Spleen (tissue), 13 donors: ENCODE measurements at regions of chr14 and their contacts with region 1.

Region 1: GRCh38 chr14:89973234-89973823 is 17.6 kb downstream of the TDP1 start:
- DNase-seq: peak; percentile 75
- H3K4me3 ChIP-seq: no peak overlapping the region
- H3K27ac ChIP-seq: peak overlapping the region in 2 of 8 donors; percentile 55 to 61
- H3K4me1 ChIP-seq: peaks cover 0 to 8% (median 1%) of the 10 kb centered on the region in 6 donors
- H3K27me3 ChIP-seq: no peaks in the 10 kb centered on the region
- CTCF ChIP-seq: peak; percentile 43 to 88 (median 69)
- POLR2A ChIP-seq: no peak

Region 2: DNA sequence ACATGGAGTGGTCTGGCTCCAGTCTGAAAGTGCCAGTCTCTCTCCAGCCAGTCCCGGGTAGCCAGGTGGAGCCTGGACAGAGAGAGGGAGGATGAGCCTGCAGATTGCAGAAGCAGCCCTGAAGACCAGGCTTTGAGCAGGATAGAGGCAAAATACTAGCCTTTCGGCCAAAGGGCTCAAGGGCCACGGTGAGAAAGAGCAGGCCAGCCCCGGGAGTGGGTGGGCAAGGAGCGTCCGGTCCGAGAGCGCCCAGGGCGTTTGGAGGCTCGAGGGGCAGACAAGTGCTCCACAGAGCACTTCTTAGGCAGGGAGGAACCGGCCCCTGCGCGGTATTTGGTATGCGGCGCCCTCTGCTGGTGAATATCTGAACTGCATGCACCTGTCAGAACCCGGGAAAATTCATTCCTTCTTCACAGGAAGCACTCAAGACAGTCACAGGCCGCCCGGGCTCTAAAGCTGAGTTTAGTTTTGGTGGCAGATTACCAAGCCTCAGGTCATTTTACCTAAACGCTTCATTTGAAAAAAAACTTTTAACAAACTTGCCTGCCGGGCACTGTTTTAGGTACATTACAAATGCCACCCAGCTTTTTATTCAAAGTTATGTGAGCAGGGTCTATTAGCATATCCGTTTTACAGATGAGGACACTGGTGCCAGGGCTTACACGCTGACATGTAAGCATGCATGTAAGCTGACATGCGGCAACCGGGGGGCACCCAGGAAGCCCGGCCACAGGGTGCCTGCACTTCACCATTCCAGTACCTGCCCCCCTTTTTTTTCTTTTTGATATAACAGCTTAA is 262.0 kb after region 1 on chr14:
- intact Hi-C with region 1: loop called (anchors 5 kb)
- DNase-seq: peak; percentile 89
- H3K4me3 ChIP-seq: peak overlapping the region in 1 of 8 donors; percentile 0
- H3K27ac ChIP-seq: no peak overlapping the region
- H3K4me1 ChIP-seq: peaks cover 0 to 8% (median 0%) of the 10 kb centered on the region in 6 donors
- H3K27me3 ChIP-seq: peaks cover 0 to 25% (median 0%) of the 10 kb centered on the region in 7 donors
- CTCF ChIP-seq: peak; percentile 69 to 93 (median 87)
- POLR2A ChIP-seq: no peak